Psoas muscle (tissue), 8 donors: ENCODE measurements at regions of chr6 and their contacts with region 1.

Region 1: GRCh38 chr6:141562851-141563763 is 569.6 kb upstream of the GJE1 start:
- DNase-seq: peak; percentile 41 to 50
- ATAC-seq: peak; percentile 64 to 95 (median 82)
- H3K4me3 ChIP-seq: peak overlapping the region; percentile 59
- H3K27ac ChIP-seq: peak overlapping the region; percentile 55
- H3K4me1 ChIP-seq: peaks cover 6% of the 10 kb centered on the region
- H3K27me3 ChIP-seq: no peaks in the 10 kb centered on the region
- CTCF ChIP-seq: peak; percentile 94

Region 2: GRCh38 chr6:141158740-141159139 is 404.4 kb before region 1 on chr6:
- intact Hi-C with region 1: loop called in 1 of 2 experiments (anchors 5 kb)
- DNase-seq: no peak
- ATAC-seq: no peak
- H3K4me3 ChIP-seq: no peak overlapping the region
- H3K27ac ChIP-seq: no peak overlapping the region
- H3K4me1 ChIP-seq: peaks cover 6% of the 10 kb centered on the region
- H3K27me3 ChIP-seq: no peaks in the 10 kb centered on the region
- CTCF ChIP-seq: no peak

Region 3: DNA sequence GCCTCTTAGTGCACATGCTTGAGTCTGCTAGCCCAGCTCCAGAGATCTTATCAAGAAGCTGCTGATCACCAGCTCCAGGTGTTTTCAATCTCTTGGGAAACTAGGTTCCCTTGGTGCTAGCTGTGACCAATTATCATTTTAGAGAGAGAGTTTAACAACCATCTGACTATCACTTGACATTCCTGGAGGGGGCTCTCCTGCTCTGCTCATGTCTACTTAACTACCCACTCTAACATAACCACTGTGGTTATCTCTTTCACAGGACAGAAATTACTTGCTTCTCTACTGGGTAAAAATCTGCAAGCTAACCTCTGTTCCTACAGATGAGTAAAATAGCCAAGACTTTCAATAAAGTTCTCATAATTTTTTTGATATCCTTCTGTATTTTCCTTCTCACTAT is 253.8 kb before region 1 on chr6:
- intact Hi-C with region 1: loop called (anchors 5 kb)
- DNase-seq: no peak
- ATAC-seq: peak in 2 of 4 donors; percentile 62 to 66
- H3K4me3 ChIP-seq: no peak overlapping the region
- H3K27ac ChIP-seq: no peak overlapping the region
- H3K4me1 ChIP-seq: no peaks in the 10 kb centered on the region
- H3K27me3 ChIP-seq: no peaks in the 10 kb centered on the region
- CTCF ChIP-seq: no peak

Region 4: DNA sequence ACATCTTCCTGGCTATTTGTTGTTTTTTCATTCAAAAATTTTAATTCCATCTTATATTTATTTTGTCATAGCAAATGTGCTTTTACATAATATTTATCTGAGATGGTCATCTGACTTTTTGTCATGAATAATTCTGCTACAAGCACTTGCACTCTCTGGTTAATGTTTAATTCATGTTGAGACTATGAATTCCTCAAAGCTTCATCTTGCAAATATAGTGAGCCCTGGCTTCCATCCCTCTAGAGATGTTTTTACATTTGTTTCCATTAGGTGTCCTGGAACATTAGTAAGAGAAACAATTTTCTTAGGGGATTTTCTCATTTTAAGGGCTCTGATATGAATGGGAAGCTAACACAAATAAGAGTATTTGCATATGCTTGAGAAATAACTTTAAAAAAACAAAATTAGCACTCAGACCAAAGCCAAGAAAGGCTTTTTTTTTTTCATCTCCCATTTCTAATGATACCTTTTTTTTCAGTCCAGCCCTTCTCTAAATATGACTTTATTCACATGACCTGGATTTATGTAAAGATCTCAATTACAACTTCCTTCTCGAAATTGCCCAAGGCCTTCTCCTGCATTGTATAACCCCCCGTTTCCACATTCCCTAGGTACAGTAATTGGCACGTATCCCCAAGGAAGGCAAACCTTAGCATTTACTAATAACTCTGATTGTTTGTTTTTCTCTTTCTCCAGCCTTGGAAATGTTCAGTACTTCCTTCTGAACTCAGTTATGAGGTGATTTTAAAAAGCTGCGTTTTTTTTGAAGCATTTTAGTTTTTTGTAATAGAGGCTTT is 227.4 kb before region 1 on chr6:
- intact Hi-C with region 1: no loop called
- DNase-seq: no peak
- ATAC-seq: no peak
- H3K4me3 ChIP-seq: no peak overlapping the region
- H3K27ac ChIP-seq: no peak overlapping the region
- H3K4me1 ChIP-seq: no peaks in the 10 kb centered on the region
- H3K27me3 ChIP-seq: no peaks in the 10 kb centered on the region
- CTCF ChIP-seq: no peak